ENCODE measurements at regions of chr6 and their contacts with region 1.

Region 1: DNA sequence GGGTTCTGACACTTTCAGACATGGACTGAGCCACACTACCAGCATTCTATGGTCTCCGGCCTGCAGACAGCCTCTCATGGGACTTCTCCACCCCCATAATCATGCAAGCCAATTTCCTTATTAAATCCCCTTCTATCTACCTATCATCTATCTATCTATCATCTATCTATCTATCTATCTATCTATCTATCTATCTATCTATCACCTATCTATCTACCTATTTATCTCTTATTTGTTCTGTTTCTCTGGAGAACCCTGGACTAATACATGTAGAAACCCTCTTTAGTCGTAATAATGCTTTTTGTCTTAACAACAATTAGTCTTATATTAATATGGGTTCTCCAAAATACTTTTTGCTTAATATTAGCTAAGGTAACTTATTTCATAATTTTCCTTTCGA is 174.1 kb upstream of the PRSS16 start:
- DNase-seq: no peak
- H3K4me3 ChIP-seq: no peak overlapping the region
- CTCF ChIP-seq: no peak

Region 2: GRCh38 chr6:26607434-26608230 is 465.8 kb before region 1 on chr6:
- CTCF ChIA-PET with region 1: interaction called, 64 read pairs
- POLR2A ChIA-PET with region 1: no interaction called
- DNase-seq: no peak
- H3K4me3 ChIP-seq: peak overlapping the region; percentile 52
- CTCF ChIP-seq: peak; percentile 62

Region 3: DNA sequence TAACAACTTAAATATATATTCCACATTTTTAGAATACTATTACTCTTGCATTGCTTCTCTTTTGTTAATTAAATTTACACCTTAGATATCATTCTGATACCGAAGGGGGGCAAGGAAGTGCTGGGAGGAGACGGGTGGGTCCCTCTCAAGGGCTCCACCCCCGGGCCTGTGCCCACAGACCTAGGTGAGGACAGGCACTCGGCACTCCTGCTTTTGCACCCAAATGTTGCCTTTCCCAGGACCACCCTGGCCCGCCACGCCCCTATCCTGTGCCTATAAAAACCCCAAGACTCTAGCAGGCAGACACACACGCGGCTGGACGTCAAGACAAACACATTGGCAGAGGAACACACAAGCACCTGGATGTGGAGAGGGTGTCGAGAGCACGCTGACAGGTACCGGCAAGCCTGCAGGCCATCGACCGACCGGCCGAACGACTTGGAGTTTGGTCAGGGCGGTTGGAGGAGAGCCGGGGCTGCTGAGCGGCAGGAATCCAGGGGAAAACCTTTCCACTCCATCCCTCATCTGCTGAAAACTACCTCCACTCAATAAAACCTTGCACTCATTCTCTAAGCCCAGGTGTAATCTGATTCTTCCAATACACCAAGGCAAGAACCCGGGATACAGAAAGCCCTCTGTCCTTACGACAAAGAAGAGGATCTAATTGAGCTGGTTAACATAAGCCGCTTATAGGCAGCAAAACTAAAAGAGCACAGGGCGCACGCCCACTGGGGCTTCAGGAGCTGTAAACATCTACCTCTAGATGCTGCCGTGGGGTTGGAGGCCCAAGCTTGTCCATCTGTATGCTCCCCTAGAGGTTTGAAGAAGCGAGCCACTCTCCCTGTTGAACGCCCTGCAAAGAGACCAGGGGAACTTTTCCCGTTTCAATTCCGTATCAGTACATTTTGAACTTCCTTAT is 23.3 kb before region 1 on chr6:
- CTCF ChIA-PET with region 1: no interaction called
- POLR2A ChIA-PET with region 1: no interaction called
- DNase-seq: no peak
- H3K4me3 ChIP-seq: no peak overlapping the region
- CTCF ChIP-seq: no peak